ENCODE measurements at regions of chr12 and their contacts with region 1.

Region 1: DNA sequence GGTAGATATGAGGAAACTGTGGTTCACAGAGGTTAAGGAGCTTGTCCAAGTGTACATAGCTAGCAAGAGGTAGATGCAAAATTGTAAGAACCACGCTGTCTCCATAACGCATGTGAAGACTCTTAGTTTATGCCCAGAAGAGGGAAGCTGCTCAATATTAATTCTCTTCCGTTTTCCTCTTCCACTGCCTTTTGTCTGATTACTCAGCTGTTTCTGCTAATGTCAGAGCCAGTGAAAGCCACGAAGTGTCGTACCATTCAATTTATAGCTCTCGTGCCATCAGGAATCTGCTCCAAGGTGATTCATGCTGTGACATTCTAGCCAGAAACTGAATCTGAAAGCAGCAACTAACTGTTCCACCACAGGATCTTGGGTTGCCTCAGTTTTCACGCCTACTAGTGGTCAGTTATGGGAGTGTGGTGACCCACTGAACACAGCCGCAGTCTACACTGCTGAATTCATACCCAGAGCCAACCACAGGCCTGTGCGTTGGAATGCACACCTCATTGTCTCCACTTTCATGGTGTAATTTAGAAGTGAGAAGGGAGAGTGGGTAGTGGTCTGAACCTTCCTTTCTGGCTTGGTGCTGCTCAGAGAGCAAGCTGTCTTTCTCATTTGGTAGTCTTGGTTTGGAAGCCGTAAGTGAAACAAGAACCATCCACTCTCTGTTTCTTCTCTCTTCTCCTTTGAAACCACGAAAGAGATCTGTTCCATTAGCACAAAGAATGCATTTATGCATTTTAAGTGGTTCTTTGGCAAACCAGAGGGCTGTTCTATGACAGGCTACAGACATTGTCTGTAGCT is 74.2 kb upstream of the NAP1L1 start:
- DNase-seq: peak; percentile 85
- ATAC-seq: peak; percentile 97
- H3K4me3 Mint-ChIP-seq: peak overlapping the region; percentile 18
- H3K27ac Mint-ChIP-seq: peak overlapping the region; percentile 26
- H3K4me1 Mint-ChIP-seq: peaks cover 15% of the 10 kb centered on the region
- H3K27me3 Mint-ChIP-seq: peaks cover 2% of the 10 kb centered on the region

Region 2: DNA sequence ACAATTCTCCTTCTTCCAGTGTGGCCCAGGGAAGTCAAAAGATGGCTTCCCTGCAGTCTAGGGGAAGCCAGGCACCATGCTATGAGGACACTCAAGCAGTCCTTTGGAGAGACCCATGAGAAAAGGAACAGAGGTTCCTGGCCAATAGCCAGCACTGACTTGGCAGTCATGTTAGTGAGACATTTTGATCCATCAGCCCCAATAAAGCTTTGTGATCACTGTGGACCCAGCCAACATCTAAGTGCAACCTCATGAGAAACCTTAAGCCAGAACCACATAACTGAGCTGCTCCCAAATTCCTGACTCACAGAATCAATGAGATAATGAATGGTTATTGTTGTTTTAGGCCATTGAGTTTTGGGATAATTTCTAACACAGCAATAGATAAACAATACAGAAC is 23.3 kb before region 1 on chr12:
- CTCF ChIA-PET with region 1: no interaction called
- POLR2A ChIA-PET with region 1: no interaction called
- intact Hi-C with region 1: no loop called
- DNase-seq: no peak
- ATAC-seq: no peak
- H3K4me3 Mint-ChIP-seq: no peak overlapping the region
- H3K27ac Mint-ChIP-seq: no peak overlapping the region
- H3K4me1 Mint-ChIP-seq: no peaks in the 10 kb centered on the region
- H3K27me3 Mint-ChIP-seq: peaks cover 2% of the 10 kb centered on the region

Region 3: DNA sequence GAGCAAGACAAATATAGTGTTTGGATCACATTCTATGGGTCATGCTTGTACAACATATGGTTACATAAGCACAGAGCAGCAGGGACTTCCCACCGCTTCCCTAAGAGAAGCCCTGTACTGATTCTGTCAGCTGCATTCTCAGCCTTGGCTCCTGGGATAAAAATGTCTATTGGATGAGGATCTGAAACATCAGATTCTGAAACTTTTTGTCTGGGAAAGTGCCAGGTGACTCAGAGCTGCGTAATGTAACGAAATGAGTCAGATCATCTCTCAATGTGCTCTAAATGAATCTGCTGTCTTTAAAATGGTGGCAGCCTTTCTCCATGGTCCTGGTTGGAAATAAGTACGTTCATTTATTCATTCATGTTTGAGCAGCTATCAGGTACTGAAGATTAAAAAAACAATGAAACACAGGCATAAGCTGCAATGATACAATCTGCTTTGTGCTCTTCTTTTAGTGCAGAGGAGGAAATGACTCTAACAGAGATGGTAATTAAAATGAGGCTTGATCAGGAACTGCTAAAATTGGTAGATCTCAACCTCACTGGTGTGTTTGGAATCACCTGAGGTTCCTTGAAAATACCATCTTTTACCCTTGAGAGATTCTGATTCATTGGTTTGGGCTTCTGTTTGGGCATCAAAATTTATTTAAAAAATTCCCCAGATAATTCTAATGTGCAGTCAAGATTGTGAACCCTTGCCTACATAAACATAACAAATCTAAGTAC is 24.9 kb after region 1 on chr12:
- CTCF ChIA-PET with region 1: interaction called, 4 read pairs
- POLR2A ChIA-PET with region 1: interaction called, 6 read pairs
- intact Hi-C with region 1: loop called (anchors 1 kb)
- DNase-seq: peak; percentile 75
- ATAC-seq: peak; percentile 94
- H3K4me3 Mint-ChIP-seq: no peak overlapping the region
- H3K27ac Mint-ChIP-seq: peak overlapping the region; percentile 68
- H3K4me1 Mint-ChIP-seq: peaks cover 12% of the 10 kb centered on the region
- H3K27me3 Mint-ChIP-seq: peaks cover 49% of the 10 kb centered on the region

Measured in activated CD4-positive, alpha-beta T cell treated with anti-CD3 and anti-CD28 coated beads for 36 hours (primary cell).